Naive thymus-derived CD4-positive, alpha-beta T cell (primary cell): ENCODE measurements at regions of chr17 and their contacts with region 1.

Region 1: DNA sequence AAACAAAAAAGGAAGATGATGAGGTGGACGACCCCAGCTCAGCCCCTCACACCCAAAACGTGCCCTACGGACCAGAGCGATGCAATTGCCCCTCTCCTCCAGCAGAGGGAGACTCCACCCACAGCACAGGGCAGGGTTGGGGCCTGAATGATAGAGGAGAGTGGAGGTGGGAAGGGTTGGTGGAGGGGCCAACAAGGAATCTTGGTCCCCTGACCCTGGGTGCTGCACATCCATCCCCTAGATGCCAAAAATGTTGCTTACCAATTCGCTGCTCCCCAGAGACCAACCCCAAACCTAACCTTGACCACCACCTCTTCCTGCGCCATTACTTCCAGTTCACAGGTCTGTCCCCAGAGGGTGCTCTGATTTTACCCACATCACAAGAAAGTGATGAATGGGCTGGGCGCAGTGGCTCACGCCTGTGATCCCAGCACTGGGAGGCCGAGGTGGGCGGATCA is 12.9 kb downstream of the P2RX5 start:
- DNase-seq: peak in 7 of 9 donors; percentile 39 to 67 (median 52)
- ATAC-seq: peak; percentile 96
- H3K4me3 ChIP-seq: no peak overlapping the region
- H3K4me3 Mint-ChIP-seq: no peak overlapping the region
- H3K27ac ChIP-seq: no peak overlapping the region
- H3K27ac Mint-ChIP-seq: peak overlapping the region in 2 of 9 donors; percentile 9 to 65
- H3K4me1 ChIP-seq: peaks cover 4 to 7% of the 10 kb centered on the region in 2 donors
- H3K4me1 Mint-ChIP-seq: peaks cover 0 to 25% (median 6%) of the 10 kb centered on the region in 7 donors
- H3K27me3 ChIP-seq: no peaks in the 10 kb centered on the region
- H3K27me3 Mint-ChIP-seq: no peaks in the 10 kb centered on the region

Region 2: DNA sequence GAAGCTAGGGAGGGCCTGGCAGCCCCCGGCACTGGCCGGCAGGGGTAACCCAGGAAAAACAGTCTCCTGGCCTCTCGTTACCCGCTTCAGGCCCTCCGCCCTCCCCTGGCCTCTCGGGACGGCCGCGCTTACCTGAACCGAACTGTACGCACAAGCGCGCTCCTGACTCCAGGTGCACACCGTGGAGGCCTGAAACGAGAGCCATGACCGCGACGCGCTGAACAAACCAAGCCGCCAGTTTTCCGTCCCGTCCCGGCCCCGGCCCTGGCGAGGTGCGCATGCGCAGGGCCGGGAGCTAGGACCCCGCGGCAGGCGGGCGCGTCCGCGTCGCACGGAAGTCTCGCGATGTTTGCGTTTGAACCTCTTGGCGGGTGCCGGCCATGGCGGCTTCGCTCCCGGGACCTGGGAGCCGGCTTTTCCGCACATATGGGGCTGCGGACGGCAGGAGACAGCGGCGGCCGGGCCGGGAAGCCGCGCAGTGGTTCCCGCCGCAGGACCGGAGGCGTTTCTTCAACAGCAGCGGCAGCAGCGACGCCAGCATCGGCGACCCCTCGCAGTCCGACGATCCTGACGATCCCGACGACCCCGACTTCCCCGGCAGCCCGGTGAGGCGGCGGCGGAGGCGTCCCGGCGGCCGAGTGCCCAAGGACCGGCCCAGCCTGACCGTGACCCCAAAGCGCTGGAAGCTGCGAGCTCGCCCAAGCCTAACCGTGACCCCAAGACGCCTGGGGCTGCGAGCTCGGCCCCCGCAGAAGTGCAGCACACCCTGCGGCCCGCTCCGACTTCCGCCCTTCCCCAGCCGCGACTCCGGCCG is 40.7 kb after region 1 on chr17 and contains the start of gene HASPIN:
- CTCF ChIA-PET with region 1: no interaction called
- POLR2A ChIA-PET with region 1: interaction called, 7 read pairs
- intact Hi-C with region 1: loop called (anchors 2 kb)
- DNase-seq: peak; percentile 85 to 97 (median 92)
- ATAC-seq: peak; percentile 92
- H3K4me3 ChIP-seq: peak within 1 kb of the TSS; percentile 77
- H3K4me3 Mint-ChIP-seq: peak within 1 kb of the TSS; percentile 84 to 95 (median 92)
- H3K27ac ChIP-seq: peak within 1 kb of the TSS; percentile 83
- H3K27ac Mint-ChIP-seq: peak within 1 kb of the TSS; percentile 65 to 94 (median 86)
- H3K4me1 ChIP-seq: peaks cover 7 to 24% of the 10 kb centered on the region in 2 donors
- H3K4me1 Mint-ChIP-seq: peaks cover 21 to 55% (median 39%) of the 10 kb centered on the region in 7 donors
- H3K27me3 ChIP-seq: no peaks in the 10 kb centered on the region
- H3K27me3 Mint-ChIP-seq: no peaks in the 10 kb centered on the region
- total RNA-seq, gene HASPIN: 0.32 to 18.5 (median 0.35) TPM

Region 3: DNA sequence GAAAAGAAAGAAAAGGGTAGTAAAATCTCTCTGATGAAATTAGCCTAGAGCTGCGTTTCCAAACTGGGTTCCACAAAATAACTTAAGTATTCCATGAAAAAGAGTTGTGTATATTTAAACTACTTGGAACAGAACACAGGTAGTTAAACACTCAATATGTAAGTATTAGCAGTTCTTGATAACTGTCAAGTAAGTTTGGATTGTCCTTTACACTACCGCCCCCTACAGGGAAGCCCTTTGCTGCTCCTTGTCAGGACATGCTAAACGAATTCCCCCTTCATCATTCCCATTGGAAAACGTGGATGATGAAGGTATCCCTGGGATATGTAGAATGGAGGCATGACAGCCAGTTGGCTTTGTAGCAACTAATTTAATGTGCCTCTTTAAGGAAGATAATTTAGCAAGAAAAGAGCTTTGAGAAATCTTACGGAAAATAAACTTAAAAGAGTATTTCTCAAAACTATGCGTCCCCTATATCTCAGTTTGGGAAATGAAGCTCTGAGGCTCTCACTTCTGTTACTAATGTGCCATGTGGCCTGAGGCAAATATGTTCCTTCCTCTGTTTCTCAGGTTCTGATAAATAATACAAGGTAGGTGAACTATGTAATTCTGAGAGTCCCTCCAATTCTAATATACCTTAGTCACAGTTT is 144.2 kb after region 1 on chr17:
- CTCF ChIA-PET with region 1: interaction called, 7 read pairs
- POLR2A ChIA-PET with region 1: no interaction called
- intact Hi-C with region 1: loop called (anchors 2 kb)
- DNase-seq: peak; percentile 22 to 75 (median 71)
- ATAC-seq: peak; percentile 74
- H3K4me3 ChIP-seq: no peak overlapping the region
- H3K4me3 Mint-ChIP-seq: no peak overlapping the region
- H3K27ac ChIP-seq: no peak overlapping the region
- H3K27ac Mint-ChIP-seq: peak overlapping the region in 2 of 9 donors; percentile 42 to 59
- H3K4me1 ChIP-seq: no peaks in the 10 kb centered on the region
- H3K4me1 Mint-ChIP-seq: peaks cover 0 to 15% (median 4%) of the 10 kb centered on the region in 7 donors
- H3K27me3 ChIP-seq: no peaks in the 10 kb centered on the region
- H3K27me3 Mint-ChIP-seq: no peaks in the 10 kb centered on the region